CD8-positive, alpha-beta T cell (primary cell): ENCODE measurements at regions of chr7 and their contacts with region 1.

Region 1: GRCh38 chr7:149284850-149285626 is 23.0 kb downstream of the ZNF783 start:
- DNase-seq: peak; percentile 96 to 99 (median 98)
- ATAC-seq: peak; percentile 96
- H3K4me3 ChIP-seq: peak overlapping the region; percentile 45 to 65
- H3K4me3 Mint-ChIP-seq: peak overlapping the region; percentile 84
- H3K27ac ChIP-seq: peak overlapping the region; percentile 36 to 42
- H3K27ac Mint-ChIP-seq: peak overlapping the region; percentile 91
- H3K4me1 ChIP-seq: peaks cover 39% of the 10 kb centered on the region
- H3K4me1 Mint-ChIP-seq: peaks cover 42% of the 10 kb centered on the region
- H3K27me3 ChIP-seq: no peaks in the 10 kb centered on the region
- H3K27me3 Mint-ChIP-seq: no peaks in the 10 kb centered on the region
- CTCF ChIP-seq: no peak

Region 2: DNA sequence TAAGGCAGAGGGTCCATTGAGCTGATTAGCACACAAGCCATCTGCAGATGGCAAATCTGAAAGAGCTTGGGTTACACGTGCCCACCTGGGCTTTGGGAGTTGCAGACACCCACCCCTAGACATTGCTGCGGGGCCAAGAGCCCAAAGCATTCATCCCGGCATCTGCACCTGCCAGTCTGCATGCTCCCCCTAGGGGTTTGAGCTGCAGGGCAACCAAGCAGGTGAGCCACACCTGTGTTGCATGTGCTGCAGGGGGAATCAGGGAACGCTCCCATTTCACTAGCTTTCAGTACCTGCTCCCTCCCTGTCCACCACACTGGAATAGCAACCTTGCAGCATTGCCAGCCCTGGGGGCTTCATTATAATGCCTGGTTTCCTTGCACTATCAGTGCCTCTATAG is 673.3 kb before region 1 on chr7:
- CTCF ChIA-PET with region 1: no interaction called
- POLR2A ChIA-PET with region 1: no interaction called
- intact Hi-C with region 1: no loop called
- DNase-seq: no peak
- ATAC-seq: no peak
- H3K4me3 ChIP-seq: no peak overlapping the region
- H3K4me3 Mint-ChIP-seq: no peak overlapping the region
- H3K27ac ChIP-seq: no peak overlapping the region
- H3K27ac Mint-ChIP-seq: no peak overlapping the region
- H3K4me1 ChIP-seq: no peaks in the 10 kb centered on the region
- H3K4me1 Mint-ChIP-seq: peaks cover 5% of the 10 kb centered on the region
- H3K27me3 ChIP-seq: peaks cover 3 to 4% of the 10 kb centered on the region in 2 experiments
- H3K27me3 Mint-ChIP-seq: peaks cover 10% of the 10 kb centered on the region
- CTCF ChIP-seq: no peak

Region 3: DNA sequence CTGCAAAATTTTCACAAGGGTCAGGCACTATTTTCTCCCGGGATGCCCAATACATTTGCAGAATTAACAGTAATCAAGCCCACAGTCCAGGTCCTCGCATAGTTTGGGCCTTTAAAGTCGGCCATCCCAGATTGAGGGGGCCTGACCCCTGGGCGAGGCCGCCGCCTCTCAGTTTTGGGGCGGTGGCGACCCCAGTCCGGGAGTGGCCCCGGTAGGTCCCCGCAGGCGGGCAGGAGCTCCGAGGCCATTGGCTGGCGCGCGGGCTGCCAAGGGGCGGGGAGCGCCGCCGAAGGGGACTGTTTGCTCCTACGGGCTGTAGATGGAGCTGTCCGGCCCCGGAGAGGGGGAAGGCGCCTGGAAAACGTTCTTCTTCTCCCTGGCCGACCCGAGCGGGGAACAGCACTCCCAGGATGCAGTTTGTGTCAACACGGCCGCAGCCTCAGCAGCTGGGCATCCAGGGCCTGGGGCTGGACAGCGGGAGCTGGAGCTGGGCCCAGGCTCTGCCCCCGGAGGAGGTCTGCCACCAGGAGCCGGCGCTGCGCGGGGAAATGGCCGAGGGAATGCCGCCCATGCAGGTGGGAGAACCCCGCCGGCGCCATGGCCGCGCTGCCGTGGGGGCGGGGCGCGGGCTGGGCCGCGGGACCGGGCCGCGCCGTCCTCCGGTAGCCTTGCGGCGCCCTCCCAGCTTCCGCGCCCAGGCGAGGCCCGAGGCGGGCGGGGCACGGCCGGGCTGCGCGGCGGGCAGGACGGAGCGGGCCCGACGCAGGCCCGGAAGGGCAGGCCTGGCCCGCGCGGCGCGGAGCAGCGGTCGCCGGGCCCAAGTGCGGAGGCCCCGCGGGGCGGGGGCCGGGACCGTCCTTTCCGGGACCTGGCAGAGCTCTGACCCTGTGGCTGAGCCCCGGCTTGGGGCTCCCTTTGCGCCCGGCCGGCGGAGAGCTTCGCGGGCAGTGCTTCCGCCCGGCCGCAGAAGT is 89.6 kb before region 1 on chr7 and contains the start of gene ZNF282:
- CTCF ChIA-PET with region 1: interaction called, 4 read pairs
- POLR2A ChIA-PET with region 1: interaction called, 10 read pairs
- intact Hi-C with region 1: no loop called
- DNase-seq: peak; percentile 31 to 80 (median 65)
- ATAC-seq: peak; percentile 78
- H3K4me3 ChIP-seq: peak within 1 kb of the TSS; percentile 83 to 84
- H3K4me3 Mint-ChIP-seq: peak within 1 kb of the TSS; percentile 86
- H3K27ac ChIP-seq: peak within 1 kb of the TSS; percentile 60 to 68
- H3K27ac Mint-ChIP-seq: peak within 1 kb of the TSS; percentile 84
- H3K4me1 ChIP-seq: peaks cover 17% of the 10 kb centered on the region
- H3K4me1 Mint-ChIP-seq: peaks cover 43% of the 10 kb centered on the region
- H3K27me3 ChIP-seq: no peaks in the 10 kb centered on the region
- H3K27me3 Mint-ChIP-seq: no peaks in the 10 kb centered on the region
- CTCF ChIP-seq: no peak
- total RNA-seq, gene ZNF282: 12.5 to 14.9 TPM

Region 4: DNA sequence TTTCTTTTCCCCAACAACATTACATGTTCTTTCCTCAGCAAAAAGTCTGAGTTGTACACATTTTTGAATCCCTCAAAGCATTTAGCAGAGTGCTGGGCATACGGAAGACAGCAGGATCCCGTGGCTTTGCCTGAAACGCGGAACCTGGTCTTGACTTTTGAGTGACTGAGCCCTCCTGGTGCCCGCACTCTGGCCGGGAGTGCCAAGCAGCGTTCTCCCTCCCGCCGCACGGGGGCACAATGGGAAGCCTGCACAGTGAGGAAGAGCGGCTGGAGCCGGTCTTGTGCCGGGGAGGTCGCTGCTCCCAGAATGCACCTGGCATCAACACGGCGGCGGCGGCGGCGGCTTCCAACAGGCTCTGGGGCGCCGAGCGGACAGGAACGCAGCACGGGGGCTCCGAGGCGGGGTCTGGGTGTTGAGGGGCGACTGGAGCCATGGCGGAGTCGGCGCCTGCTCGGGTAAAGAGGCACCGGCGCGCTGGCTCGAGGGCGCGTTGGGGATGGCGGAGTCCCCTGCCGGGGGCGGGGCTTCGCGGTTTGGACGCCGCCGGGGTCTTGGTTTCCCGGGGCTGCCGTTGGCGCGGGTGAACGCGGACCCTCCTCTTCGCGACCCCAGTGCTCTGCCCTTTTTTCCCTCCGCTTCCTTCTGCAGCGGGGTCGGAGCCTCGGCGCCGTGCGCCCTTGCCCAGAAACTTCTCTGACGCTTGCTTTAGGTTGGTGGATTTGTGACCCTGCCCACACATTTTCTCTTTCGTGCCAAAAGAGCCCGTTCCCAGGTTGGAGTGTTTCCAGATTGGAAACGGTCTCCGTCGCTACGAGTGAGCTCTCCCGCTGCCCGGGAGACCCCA is 45.5 kb before region 1 on chr7 and contains the start of gene ZNF212:
- CTCF ChIA-PET with region 1: no interaction called
- POLR2A ChIA-PET with region 1: no interaction called
- intact Hi-C with region 1: loop called (anchors 1 to 2 kb)
- DNase-seq: peak; percentile 76 to 92 (median 89)
- ATAC-seq: peak; percentile 100
- H3K4me3 ChIP-seq: peak within 1 kb of the TSS; percentile 81 to 95
- H3K4me3 Mint-ChIP-seq: peak within 1 kb of the TSS; percentile 92
- H3K27ac ChIP-seq: peak within 1 kb of the TSS; percentile 41 to 67
- H3K27ac Mint-ChIP-seq: peak within 1 kb of the TSS; percentile 91
- H3K4me1 ChIP-seq: peaks cover 23% of the 10 kb centered on the region
- H3K4me1 Mint-ChIP-seq: peaks cover 34% of the 10 kb centered on the region
- H3K27me3 ChIP-seq: peaks cover 0 to 4% of the 10 kb centered on the region in 2 experiments
- H3K27me3 Mint-ChIP-seq: peaks cover 7% of the 10 kb centered on the region
- CTCF ChIP-seq: peak; percentile 85
- total RNA-seq, gene ZNF212: 20.9 to 22.1 TPM

Region 5: GRCh38 chr7:149261829-149262617 is 23.0 kb before region 1 on chr7 and contains the start of gene ZNF783:
- CTCF ChIA-PET with region 1: interaction called, 47 read pairs
- POLR2A ChIA-PET with region 1: interaction called, 38 read pairs
- intact Hi-C with region 1: loop called (anchors 1 kb)
- DNase-seq: peak; percentile 68 to 96 (median 83)
- ATAC-seq: peak; percentile 93
- H3K4me3 ChIP-seq: peak within 1 kb of the TSS; percentile 69
- H3K4me3 Mint-ChIP-seq: peak within 1 kb of the TSS; percentile 86
- H3K27ac ChIP-seq: peak within 1 kb of the TSS; percentile 50 to 83
- H3K27ac Mint-ChIP-seq: peak within 1 kb of the TSS; percentile 94
- H3K4me1 ChIP-seq: peaks cover 30% of the 10 kb centered on the region
- H3K4me1 Mint-ChIP-seq: peaks cover 37% of the 10 kb centered on the region
- H3K27me3 ChIP-seq: no peaks in the 10 kb centered on the region
- H3K27me3 Mint-ChIP-seq: no peaks in the 10 kb centered on the region
- CTCF ChIP-seq: peak; percentile 87
- total RNA-seq, gene ZNF783: 24.0 to 27.3 TPM

Region 6: DNA sequence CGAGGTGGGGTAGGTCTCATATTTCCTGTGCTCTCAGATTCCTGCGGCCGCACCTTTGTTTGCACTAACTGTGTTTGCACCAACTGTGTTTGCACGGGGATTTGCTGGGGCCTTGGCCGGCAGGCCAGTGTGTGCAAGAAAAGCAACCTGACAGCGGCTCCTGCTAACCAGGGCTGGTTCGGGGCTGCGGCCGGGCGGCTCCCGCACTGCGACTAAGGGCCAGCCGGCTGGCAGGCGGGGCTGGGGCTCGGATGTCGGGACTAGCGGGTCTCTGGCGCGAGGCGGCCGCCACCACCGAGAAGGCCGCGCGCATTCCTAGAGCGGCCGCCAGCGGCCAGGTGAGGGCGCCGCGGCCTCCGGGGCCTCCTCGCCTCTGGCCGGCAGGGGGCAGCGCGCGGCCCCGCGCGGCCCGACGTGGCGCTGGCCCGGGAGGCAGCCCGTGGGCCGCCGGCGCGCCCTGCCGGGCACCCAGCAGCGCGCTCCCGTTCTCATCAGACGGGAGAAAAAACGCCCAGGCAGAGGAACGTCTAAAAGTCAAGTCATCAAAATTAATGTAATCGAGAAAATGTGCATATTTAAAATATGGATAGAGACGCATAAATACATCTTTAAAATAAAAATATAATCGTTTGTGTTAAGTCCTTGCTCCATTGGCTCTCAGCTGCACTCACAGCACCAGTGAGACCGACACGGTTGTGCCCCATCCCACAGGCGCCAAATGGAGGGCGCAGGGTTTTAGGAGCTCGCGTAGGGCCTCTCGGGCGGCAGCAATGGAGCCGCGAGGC is 137.3 kb after region 1 on chr7:
- CTCF ChIA-PET with region 1: interaction called, 4 read pairs
- POLR2A ChIA-PET with region 1: interaction called, 15 read pairs
- intact Hi-C with region 1: loop called (anchors 1 to 5 kb)
- DNase-seq: peak; percentile 50 to 91 (median 66)
- ATAC-seq: peak; percentile 97
- H3K4me3 ChIP-seq: peak overlapping the region; percentile 71 to 76
- H3K4me3 Mint-ChIP-seq: peak overlapping the region; percentile 76
- H3K27ac ChIP-seq: peak overlapping the region; percentile 60 to 82
- H3K27ac Mint-ChIP-seq: peak overlapping the region; percentile 75
- H3K4me1 ChIP-seq: peaks cover 5% of the 10 kb centered on the region
- H3K4me1 Mint-ChIP-seq: peaks cover 12% of the 10 kb centered on the region
- H3K27me3 ChIP-seq: no peaks in the 10 kb centered on the region
- H3K27me3 Mint-ChIP-seq: no peaks in the 10 kb centered on the region
- CTCF ChIP-seq: no peak

Region 7: DNA sequence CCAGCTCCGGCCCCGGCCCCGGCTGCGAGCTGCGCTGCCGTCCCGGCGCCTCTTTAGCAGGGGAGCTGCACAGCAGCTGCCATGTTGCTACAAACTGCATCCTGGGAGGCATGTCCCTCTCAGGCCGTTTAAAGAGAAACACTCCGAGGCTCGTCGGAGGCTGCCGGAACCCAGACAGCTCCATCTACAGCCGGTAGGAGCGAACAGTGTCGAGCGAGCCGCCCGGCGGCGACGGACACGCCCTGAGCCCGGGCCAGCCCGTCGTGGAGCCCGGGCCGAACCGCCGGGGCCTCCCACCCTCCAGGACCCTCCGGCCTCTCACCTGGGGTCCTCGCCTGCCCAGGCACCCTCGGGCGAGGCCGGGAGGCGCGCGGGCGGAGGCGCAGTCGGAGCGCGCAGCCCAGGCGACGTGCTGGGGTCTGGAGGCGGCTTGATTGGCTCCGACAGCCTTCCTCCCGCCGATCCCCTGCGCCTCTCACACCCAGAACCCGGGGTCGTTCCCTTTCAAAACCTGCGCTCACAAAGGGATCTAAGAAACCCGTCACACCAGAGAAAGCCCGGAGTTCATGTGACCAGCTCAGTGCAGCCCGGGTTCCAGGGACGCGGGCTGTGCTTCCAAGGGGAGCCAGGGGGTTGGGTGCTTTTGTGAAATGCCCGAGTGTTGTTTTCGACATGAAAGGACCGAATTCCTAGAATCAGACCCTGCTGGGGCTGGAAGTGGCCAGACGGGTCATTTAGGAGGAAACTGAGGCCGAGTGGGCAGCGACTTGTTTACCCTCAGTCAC is 175.6 kb after region 1 on chr7 and contains the start of gene ZNF777:
- CTCF ChIA-PET with region 1: no interaction called
- POLR2A ChIA-PET with region 1: interaction called, 3 read pairs
- intact Hi-C with region 1: loop called in 1 of 2 experiments (anchors 1 kb)
- DNase-seq: peak; percentile 66 to 90 (median 81)
- ATAC-seq: peak; percentile 97
- H3K4me3 ChIP-seq: peak within 1 kb of the TSS; percentile 69 to 74
- H3K4me3 Mint-ChIP-seq: peak within 1 kb of the TSS; percentile 88
- H3K27ac ChIP-seq: peak within 1 kb of the TSS; percentile 55 to 69
- H3K27ac Mint-ChIP-seq: peak within 1 kb of the TSS; percentile 72
- H3K4me1 ChIP-seq: peaks cover 24% of the 10 kb centered on the region
- H3K4me1 Mint-ChIP-seq: peaks cover 33% of the 10 kb centered on the region
- H3K27me3 ChIP-seq: no peaks in the 10 kb centered on the region
- H3K27me3 Mint-ChIP-seq: peaks cover 10% of the 10 kb centered on the region
- CTCF ChIP-seq: peak; percentile 57
- total RNA-seq, gene ZNF777: 21.0 to 22.2 TPM

Region 8: DNA sequence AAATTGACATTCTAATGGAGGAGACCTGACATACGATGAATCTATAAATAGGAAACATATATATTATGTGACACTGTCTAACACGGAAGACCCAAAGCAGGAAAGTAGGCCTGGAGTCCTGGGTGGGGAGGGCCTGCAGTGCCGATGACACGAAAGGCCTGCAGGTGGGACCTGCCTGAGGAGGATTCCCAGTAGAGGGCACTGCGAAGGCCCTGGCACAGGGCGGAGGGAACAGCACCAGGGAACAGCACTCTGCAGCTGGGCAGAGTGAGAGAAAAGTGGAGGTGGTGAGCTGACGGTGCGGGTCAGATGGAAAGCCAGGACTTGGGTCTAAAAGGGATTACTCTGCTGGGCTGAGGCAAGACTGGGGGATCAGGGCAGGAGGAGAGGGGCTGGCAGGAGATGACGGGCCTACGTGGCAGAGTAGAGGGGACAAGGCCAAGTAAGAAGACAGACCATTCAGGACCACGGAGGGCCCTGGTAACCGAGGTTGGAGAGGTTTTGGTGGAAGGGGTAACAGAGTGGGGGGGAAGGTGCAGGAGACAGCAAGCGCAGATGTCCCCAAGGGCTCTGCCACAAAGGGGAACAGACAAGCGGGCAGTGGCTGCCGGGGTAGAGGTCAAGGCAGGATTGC is 204.5 kb after region 1 on chr7:
- CTCF ChIA-PET with region 1: no interaction called
- POLR2A ChIA-PET with region 1: no interaction called
- intact Hi-C with region 1: no loop called
- DNase-seq: peak in 2 of 9 experiments; percentile 18 to 21
- ATAC-seq: peak; percentile 51
- H3K4me3 ChIP-seq: no peak overlapping the region
- H3K4me3 Mint-ChIP-seq: no peak overlapping the region
- H3K27ac ChIP-seq: no peak overlapping the region
- H3K27ac Mint-ChIP-seq: peak overlapping the region; percentile 20
- H3K4me1 ChIP-seq: no peaks in the 10 kb centered on the region
- H3K4me1 Mint-ChIP-seq: peaks cover 8% of the 10 kb centered on the region
- H3K27me3 ChIP-seq: no peaks in the 10 kb centered on the region
- H3K27me3 Mint-ChIP-seq: no peaks in the 10 kb centered on the region
- CTCF ChIP-seq: no peak

Region 9: DNA sequence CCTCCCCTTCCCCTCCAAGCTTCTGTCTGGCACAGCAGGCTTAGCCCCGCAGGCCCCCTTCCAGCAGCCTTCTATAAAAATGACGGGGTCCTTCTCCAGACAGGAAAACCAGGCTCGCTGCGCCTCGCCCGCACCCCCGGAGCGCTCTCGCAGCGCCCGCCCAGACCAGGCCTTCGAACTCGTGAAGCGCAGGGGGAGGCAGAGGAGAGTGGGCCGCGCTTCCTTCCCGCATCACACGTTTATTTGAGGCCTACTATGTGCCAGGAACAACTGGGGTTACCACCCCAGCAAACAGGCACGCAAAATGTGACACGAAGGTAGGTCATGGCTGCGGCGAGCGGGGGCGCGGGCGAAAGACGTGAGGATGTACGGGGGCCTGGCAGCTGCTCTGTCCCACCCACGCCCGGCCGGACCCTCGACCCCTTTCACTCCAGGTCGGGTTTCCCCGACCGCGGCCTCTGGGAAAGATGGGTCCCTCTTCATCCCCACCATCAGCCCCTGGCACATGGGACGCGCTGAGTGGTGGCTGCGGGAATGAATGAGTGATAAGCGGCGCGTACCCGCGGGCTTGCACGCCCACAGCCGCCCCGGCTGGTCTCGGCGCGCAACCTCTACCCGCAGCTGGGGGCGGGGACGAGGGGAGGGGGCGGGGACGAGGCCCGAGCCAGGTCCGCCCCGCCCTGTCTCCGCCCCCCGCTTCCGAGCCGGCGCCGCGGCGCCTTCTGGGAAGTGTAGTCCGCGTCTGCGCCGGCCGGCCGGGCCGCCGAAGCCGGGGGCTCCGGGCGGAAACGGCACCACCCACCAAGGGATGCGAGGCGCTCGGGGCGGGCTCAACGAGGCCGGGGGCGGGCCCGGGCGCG is 429.2 kb after region 1 on chr7:
- CTCF ChIA-PET with region 1: no interaction called
- POLR2A ChIA-PET with region 1: no interaction called
- intact Hi-C with region 1: loop called (anchors 5 to 10 kb)
- DNase-seq: peak; percentile 86 to 97 (median 94)
- ATAC-seq: peak; percentile 95
- H3K4me3 ChIP-seq: peak overlapping the region; percentile 65 to 68
- H3K4me3 Mint-ChIP-seq: peak overlapping the region; percentile 80
- H3K27ac ChIP-seq: peak overlapping the region; percentile 12
- H3K27ac Mint-ChIP-seq: peak overlapping the region; percentile 22
- H3K4me1 ChIP-seq: peaks cover 18% of the 10 kb centered on the region
- H3K4me1 Mint-ChIP-seq: peaks cover 23% of the 10 kb centered on the region
- H3K27me3 ChIP-seq: no peaks in the 10 kb centered on the region
- H3K27me3 Mint-ChIP-seq: no peaks in the 10 kb centered on the region
- CTCF ChIP-seq: no peak